ENCODE measurements at regions of chr7 and their contacts with region 1.

Region 1: GRCh38 chr7:24907311-24907886 is 72.6 kb downstream of the OSBPL3 start:
- DNase-seq: no peak
- ATAC-seq: peak in 1 of 4 donors; percentile 17
- H3K4me3 ChIP-seq: no peak overlapping the region
- H3K27ac ChIP-seq: peak overlapping the region in 1 of 12 donors; percentile 32
- H3K4me1 ChIP-seq: peaks cover 0 to 76% (median 13%) of the 10 kb centered on the region in 12 donors
- H3K27me3 ChIP-seq: no peaks in the 10 kb centered on the region
- CTCF ChIP-seq: no peak
- POLR2A ChIP-seq: no peak

Region 2: GRCh38 chr7:24963218-24963617 is 55.8 kb after region 1 on chr7:
- intact Hi-C with region 1: loop called in 1 of 10 experiments (anchors 5 kb)
- DNase-seq: peak; percentile 41 to 68 (median 51)
- ATAC-seq: peak; percentile 63 to 85 (median 76)
- H3K4me3 ChIP-seq: no peak overlapping the region
- H3K27ac ChIP-seq: peak overlapping the region in 2 of 12 donors; percentile 21 to 76
- H3K4me1 ChIP-seq: peaks cover 0 to 38% (median 0%) of the 10 kb centered on the region in 12 donors
- H3K27me3 ChIP-seq: no peaks in the 10 kb centered on the region
- CTCF ChIP-seq: no peak
- POLR2A ChIP-seq: no peak